ENCODE measurements at regions of chr4 and their contacts with region 1.

Region 1: DNA sequence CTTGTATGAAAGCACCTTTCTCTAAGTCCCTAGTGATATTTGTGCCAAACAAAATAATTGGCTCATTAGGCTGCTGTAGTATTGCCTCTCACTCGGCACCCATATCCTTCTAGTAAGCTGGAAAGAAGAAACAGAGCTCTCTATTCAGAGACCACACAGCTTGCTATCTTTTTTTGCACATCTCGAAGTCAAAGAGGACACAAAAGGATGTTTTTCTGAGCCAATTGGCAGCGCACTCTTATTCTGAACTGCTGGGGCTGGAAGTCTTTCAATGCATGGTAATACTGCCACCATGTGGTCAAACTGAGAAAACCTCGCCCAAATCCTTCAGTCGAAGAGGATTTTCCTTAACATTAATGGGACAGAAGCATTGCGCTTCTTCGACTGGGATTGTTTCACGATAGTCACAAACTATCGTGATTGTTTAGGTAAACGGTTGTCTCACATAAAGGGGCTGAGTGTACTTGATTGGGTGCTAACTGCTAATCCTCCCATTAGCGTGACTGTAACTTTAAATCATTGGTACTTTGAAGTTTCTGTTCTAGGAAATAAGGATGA is 572.0 kb upstream of the LCORL start:
- DNase-seq: peak; percentile 60
- CTCF ChIP-seq: peak; percentile 84

Region 2: DNA sequence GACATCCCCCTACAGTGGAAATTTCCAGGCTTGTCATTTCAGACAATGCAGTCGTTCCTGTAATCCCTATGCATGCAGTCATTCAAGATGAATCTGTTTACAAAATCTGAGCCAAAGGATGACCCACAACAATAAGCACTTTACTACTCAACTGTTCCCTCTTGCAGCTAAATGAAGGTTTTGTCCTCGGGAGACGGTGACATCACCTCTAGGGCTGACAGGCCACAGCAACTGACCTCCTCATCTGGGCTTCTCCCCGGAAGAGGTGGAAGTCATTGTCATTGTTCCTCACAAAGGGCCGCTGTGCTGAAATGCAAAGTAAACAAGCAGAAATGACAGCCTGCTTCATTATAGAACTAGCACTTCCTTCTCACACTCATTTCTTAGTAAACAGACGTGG is 1049.3 kb before region 1 on chr4:
- in situ Hi-C with region 1: loop called (anchors 25 kb)
- DNase-seq: no peak
- CTCF ChIP-seq: no peak

Region 3: DNA sequence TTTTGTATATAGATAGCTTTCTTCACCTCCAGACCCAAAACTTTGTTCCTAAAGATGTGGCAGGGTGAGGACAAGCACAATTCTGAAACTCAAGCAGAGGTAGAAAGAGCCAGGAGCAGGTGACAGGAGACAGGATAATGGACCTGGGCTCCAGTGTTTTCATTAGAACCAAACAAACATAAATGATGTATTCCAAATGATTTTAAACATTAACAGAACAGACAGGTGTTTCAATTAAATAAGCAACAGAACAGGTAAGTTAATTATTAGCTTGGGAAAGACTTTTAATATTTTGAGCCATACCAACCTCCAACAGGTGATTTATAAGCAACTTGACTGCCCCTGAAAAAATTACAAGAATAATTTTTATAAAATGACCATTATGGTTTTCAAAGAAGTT is 112.6 kb before region 1 on chr4:
- in situ Hi-C with region 1: no loop called
- DNase-seq: no peak
- CTCF ChIP-seq: no peak

Region 4: GRCh38 chr4:18869166-18869565 is 275.6 kb after region 1 on chr4:
- in situ Hi-C with region 1: no loop called
- DNase-seq: no peak
- CTCF ChIP-seq: no peak

Region 5: DNA sequence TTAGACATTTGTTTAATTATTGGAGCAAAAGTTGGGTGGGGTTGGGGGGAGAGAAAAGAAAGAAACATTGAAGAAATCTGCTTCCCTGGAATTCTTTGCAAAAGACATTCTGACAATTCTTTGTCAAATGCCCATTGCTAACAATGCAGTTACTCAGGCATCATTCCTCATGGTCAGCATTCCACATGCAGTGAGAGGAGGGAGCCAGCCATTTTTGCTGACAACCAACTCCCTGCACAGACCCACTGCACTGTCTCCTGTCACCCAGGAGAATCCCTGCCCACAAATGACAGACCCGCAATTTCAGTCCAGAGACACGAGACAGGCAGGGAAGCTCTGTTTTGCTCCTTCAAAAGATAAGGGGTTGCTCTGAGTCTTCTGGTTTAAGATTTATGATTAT is 673.0 kb after region 1 on chr4:
- in situ Hi-C with region 1: no loop called
- DNase-seq: no peak
- CTCF ChIP-seq: no peak

Measured in GM13977 (cell line).